Activated B cell treated with CpG ODN at 0.5 μM for 24 hours (primary cell): ENCODE measurements at regions of chr6 and their contacts with region 1.

Region 1: DNA sequence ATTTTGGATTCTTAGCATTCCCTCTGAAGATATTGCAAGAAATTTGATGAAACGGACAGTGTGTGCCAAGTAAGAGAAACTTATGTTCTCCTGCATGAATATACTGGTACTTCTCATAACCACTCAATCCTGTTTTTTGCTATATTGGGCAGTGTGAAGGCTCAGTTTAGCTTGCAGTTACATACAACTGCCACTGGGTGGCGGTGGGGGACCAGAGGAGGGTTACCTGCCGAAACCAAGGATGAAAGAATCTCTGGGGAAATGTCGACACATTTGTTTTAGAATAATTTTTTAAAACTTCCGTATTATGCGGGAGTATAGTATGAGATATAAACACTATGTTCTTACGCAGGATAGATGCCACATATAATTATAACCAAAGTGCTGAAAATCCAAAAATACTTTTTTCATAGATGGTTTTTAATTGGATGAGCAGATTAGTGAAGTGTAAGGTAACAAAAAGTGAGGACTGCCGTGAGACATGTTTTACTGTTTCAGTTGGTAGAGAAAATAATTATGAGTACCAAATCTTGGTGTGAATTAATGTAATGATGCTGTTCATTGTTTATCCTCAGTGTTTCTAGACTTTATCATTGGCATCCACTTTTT is 9.7 kb downstream of the TRMT11 start:
- DNase-seq: peak; percentile 50
- ATAC-seq: peak; percentile 100
- H3K4me3 Mint-ChIP-seq: peak overlapping the region; percentile 76
- H3K27ac Mint-ChIP-seq: no peak overlapping the region
- H3K4me1 Mint-ChIP-seq: peaks cover 8% of the 10 kb centered on the region
- H3K27me3 Mint-ChIP-seq: no peaks in the 10 kb centered on the region
- CTCF ChIP-seq: peak; percentile 90

Region 2: DNA sequence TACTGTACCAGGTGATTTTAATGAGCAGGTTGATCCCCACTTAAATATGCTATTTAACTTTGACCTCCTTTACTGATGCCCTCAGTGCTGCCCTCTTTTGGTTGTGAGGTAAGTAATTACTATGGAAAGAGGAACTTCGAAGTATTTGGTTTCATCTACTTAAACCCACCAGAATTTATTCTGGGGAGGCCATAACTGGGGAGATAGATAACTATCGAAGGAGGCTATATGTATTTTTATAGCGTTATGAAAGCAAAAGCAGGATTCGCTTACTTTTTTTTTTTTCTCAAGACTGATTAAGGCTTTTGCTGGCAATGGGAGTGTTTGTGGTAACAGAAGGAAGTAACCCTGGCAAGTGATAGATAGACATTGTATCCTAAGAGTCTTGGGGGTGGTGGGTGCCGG is 174.9 kb after region 1 on chr6:
- CTCF ChIA-PET with region 1: no interaction called
- POLR2A ChIA-PET with region 1: no interaction called
- intact Hi-C with region 1: loop called (anchors 1 kb)
- DNase-seq: no peak
- ATAC-seq: no peak
- H3K4me3 Mint-ChIP-seq: no peak overlapping the region
- H3K27ac Mint-ChIP-seq: no peak overlapping the region
- H3K4me1 Mint-ChIP-seq: peaks cover 3% of the 10 kb centered on the region
- H3K27me3 Mint-ChIP-seq: no peaks in the 10 kb centered on the region
- CTCF ChIP-seq: no peak

Region 3: DNA sequence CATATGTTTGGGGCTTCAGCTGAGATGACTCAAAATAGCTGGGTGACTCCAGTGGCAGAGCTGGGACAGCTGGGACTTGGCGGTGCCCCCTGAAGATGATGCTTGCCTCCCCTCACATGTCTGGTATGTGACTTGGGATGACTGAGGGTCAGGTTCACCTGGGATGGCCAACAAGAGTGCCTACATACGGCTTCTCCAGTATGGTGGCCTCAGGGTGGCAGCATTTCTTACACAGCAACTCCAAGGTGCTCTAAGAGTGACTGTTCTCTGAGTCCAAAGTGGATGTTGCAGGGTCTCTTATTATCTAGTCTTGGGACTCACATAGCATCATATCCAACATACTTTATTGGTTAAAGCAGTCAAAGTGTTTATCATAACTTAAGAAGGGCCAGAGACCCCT is 256.1 kb after region 1 on chr6:
- CTCF ChIA-PET with region 1: no interaction called
- POLR2A ChIA-PET with region 1: no interaction called
- intact Hi-C with region 1: no loop called
- DNase-seq: no peak
- ATAC-seq: no peak
- H3K4me3 Mint-ChIP-seq: no peak overlapping the region
- H3K27ac Mint-ChIP-seq: no peak overlapping the region
- H3K4me1 Mint-ChIP-seq: no peaks in the 10 kb centered on the region
- H3K27me3 Mint-ChIP-seq: no peaks in the 10 kb centered on the region
- CTCF ChIP-seq: no peak

Region 4: DNA sequence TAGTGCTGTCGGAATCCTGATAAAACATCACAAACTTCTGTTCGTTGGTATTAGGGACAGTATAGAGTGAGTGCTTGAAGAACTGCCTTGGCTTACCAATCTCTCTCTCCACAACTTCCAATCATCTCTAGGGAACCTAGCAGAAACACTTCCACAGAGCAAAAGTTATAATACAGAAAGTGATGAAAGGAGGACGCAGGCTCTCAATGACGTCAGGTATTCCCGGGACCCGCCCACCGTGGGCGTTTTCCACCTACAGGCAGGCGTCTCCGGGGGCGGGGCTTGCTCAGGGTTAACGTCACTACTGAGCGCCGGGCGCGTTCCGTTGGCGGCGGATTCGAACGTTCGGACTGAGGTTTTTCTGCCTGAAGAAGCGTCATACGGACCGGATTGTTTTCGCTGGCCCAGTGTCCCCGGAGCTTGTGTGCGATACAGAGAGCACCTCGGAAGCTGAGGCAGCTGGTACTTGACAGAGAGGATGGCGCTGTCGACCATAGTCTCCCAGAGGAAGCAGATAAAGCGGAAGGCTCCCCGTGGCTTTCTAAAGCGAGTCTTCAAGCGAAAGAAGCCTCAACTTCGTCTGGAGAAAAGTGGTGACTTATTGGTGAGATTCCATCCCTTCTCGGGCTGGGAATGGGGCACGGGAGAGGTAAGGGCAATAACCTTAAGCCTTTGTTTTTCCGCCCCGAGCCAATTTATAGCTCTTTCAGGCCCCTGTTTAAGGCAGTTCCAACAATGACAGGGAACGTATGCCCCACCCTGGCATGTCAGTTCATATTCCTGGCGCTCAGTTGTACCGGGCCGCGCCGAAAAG is 343.9 kb after region 1 on chr6 and contains the start of gene CENPW:
- CTCF ChIA-PET with region 1: no interaction called
- POLR2A ChIA-PET with region 1: no interaction called
- intact Hi-C with region 1: loop called (anchors 10 kb)
- DNase-seq: peak; percentile 77
- ATAC-seq: peak; percentile 94
- H3K4me3 Mint-ChIP-seq: no peak within 1 kb of the TSS
- H3K27ac Mint-ChIP-seq: no peak within 1 kb of the TSS
- H3K4me1 Mint-ChIP-seq: peaks cover 11% of the 10 kb centered on the region
- H3K27me3 Mint-ChIP-seq: no peaks in the 10 kb centered on the region
- CTCF ChIP-seq: no peak
- total RNA-seq, gene CENPW: 4.4 and 5.2 TPM in 2 replicates

Region 5: GRCh38 chr6:126657561-126658175 is 661.6 kb after region 1 on chr6:
- CTCF ChIA-PET with region 1: no interaction called
- POLR2A ChIA-PET with region 1: no interaction called
- intact Hi-C with region 1: loop called (anchors 5 kb)
- DNase-seq: no peak
- ATAC-seq: no peak
- H3K4me3 Mint-ChIP-seq: no peak overlapping the region
- H3K27ac Mint-ChIP-seq: no peak overlapping the region
- H3K4me1 Mint-ChIP-seq: no peaks in the 10 kb centered on the region
- H3K27me3 Mint-ChIP-seq: no peaks in the 10 kb centered on the region
- CTCF ChIP-seq: no peak

Region 6: GRCh38 chr6:127120787-127121636 is 1124.9 kb after region 1 on chr6:
- CTCF ChIA-PET with region 1: interaction called, 3 read pairs
- POLR2A ChIA-PET with region 1: no interaction called
- intact Hi-C with region 1: loop called (anchors 1 kb)
- DNase-seq: peak; percentile 33
- ATAC-seq: peak; percentile 78
- H3K4me3 Mint-ChIP-seq: peak overlapping the region; percentile 39
- H3K27ac Mint-ChIP-seq: no peak overlapping the region
- H3K4me1 Mint-ChIP-seq: peaks cover 35% of the 10 kb centered on the region
- H3K27me3 Mint-ChIP-seq: peaks cover 48% of the 10 kb centered on the region
- CTCF ChIP-seq: no peak

Region 7: DNA sequence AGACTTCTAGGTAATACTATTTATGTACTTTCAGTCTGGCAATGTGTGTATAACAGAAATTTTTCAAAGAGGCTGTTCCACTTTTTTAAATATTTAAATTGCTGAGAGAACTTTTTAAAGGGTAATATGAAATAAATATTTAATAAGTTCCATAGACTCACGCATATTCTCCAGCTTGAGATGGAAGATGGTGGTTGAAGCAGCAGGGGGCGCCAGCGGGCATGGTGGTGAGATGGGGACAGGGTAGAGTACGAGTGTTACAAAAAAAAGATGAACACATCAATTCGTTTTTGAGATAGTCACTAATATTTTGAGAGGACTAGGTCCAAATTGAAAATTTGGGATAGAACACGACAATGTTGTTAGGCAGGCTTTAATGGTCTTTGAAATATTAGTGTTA is 1190.8 kb after region 1 on chr6:
- CTCF ChIA-PET with region 1: interaction called, 4 read pairs
- POLR2A ChIA-PET with region 1: no interaction called
- intact Hi-C with region 1: loop called (anchors 1 kb)
- DNase-seq: peak; percentile 17
- ATAC-seq: no peak
- H3K4me3 Mint-ChIP-seq: no peak overlapping the region
- H3K27ac Mint-ChIP-seq: no peak overlapping the region
- H3K4me1 Mint-ChIP-seq: no peaks in the 10 kb centered on the region
- H3K27me3 Mint-ChIP-seq: peaks cover 7% of the 10 kb centered on the region
- CTCF ChIP-seq: no peak

Region 8: GRCh38 chr6:127539272-127539671 is 1543.2 kb after region 1 on chr6:
- CTCF ChIA-PET with region 1: no interaction called
- POLR2A ChIA-PET with region 1: no interaction called
- intact Hi-C with region 1: loop called (anchors 2 kb)
- DNase-seq: no peak
- ATAC-seq: no peak
- H3K4me3 Mint-ChIP-seq: no peak overlapping the region
- H3K27ac Mint-ChIP-seq: no peak overlapping the region
- H3K4me1 Mint-ChIP-seq: no peaks in the 10 kb centered on the region
- H3K27me3 Mint-ChIP-seq: peaks cover 8% of the 10 kb centered on the region
- CTCF ChIP-seq: no peak